Activated CD4-positive, alpha-beta T cell treated with anti-CD3 and anti-CD28 coated beads for 36 hours (primary cell): ENCODE measurements at regions of chr1 and their contacts with region 1.

Region 1: DNA sequence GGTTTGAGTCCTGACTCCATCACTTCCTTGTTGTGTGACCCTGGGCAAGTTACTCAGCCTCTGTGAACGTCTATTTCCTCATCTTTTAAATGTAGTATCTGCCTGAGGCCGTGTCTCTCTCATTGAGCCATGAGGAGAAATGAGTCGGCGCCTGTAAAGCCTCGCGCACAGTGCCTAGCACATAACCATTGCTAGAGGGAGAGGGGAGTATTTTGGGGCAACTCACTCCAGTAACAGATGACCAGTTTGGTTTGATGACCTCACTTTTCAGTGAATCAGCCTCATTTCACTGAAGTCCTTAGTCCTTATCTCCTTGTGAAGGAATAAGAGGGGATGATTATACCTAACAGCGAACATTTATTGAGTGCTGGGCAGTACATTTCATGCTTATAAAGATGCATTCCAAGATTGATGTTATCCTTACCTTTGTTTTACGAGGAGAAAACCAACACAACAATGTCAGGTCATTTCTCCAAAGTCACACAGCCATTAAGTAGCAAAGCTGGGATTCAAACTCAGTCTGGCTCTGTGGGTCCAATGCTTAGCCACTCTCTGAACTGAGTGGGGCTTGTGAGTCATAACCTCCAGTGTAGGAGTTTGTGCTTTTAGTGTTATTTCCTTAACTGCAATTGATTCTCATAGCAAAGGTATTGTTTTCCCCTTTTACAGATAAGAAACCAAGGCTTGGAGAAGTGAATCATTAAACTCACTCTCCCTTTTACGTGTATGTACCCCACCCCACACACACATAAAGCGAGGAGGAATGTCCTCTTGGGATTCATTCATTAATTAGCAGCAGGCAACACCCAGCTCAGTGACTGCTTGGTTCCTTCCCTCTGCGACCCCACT is 25.9 kb downstream of the KCNC4 start:
- DNase-seq: peak; percentile 85
- ATAC-seq: peak; percentile 90
- H3K4me3 Mint-ChIP-seq: peak overlapping the region; percentile 42
- H3K27ac Mint-ChIP-seq: peak overlapping the region; percentile 95
- H3K4me1 Mint-ChIP-seq: peaks cover 57% of the 10 kb centered on the region
- H3K27me3 Mint-ChIP-seq: no peaks in the 10 kb centered on the region

Region 2: DNA sequence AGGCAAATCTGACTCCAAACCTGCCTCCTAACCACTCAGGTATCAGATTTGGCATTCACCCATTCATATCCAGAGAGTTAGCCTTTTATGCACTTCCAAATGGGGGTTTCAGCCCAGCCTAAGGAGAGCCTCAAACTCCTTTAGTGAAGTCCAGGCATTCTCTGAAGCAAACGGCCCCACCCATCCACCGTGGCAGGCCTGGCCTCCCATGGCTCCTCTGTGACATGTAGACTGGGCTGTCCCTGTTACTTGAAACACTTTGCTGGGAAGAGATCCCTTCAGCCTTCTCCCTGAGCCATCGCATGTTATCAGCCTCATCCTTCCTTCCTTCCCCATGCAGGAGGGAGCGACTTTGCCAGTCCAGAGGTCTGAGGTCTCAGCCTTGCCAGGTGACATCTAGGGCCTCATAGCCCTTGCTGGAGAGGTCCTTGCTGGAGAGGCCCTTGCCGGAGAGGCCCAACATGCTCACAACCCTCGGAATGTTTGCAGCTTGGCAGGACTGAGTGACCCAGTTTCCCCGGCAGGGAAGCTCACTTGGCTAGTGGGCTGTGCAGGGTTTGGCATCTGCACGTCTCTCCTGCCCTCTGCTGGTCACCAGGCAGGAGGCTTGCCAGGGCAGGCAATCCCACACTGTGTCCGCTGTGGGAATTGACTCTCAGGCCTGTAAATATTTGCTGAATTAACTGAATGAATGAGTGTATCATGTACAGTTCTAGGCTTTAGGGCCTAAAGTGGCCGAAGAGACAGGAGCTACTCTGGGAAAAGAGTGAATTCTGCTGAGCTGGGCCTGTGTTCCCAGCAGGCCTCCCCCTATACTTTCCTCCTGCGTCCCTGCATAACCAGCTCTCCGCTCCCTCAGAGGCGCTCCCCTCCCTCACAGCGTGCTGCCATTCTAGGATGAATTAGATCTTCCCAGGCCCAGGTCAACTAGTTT is 76.4 kb after region 1 on chr1:
- CTCF ChIA-PET with region 1: no interaction called
- POLR2A ChIA-PET with region 1: no interaction called
- intact Hi-C with region 1: no loop called
- DNase-seq: peak; percentile 86
- ATAC-seq: peak; percentile 98
- H3K4me3 Mint-ChIP-seq: no peak overlapping the region
- H3K27ac Mint-ChIP-seq: no peak overlapping the region
- H3K4me1 Mint-ChIP-seq: no peaks in the 10 kb centered on the region
- H3K27me3 Mint-ChIP-seq: no peaks in the 10 kb centered on the region

Region 3: DNA sequence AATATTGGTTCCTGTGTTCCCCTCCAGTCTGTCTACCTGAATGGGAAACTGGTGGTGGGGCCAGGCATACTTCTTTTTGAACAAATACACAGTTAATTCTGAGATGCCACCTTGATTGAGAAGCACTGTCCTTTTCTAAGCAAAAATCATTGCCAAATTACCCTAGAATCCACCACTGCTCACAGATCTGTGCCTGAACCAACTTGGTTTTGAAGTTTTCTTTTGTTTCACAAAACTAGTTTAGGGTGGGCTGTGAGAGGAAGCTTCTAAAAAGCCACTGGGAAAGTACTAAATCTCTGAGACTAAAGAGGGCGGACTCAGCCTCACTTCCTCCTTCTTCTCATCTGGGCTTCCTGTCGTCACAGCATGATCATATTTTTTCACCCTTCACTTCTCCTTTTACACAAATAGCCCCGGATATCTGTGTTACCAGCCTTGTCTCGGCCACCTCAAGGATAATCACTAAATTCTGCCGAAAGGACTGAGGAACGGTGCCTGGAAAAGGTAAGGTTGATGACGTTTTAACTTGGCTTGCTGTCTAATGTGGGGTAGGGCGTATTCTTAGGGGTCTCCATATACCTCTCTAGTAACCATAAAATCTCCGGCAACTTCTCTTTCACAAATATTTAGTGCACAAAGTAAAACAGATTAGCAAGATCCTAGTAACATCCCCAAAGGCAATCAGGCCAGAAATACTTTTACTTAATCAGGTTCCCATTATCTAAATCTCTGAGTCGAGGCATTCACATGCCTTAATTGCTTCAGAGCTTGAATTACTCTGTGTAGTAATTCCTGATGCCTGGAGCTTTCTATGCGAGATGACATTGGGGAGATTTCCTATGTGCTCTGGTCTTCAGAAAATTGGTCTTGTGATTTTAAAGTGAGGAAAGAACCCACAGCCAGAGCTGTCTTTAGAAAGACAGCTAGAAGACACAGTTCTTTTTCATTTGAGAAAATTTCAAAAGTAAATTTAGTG is 637.0 kb after region 1 on chr1 and contains the start of gene CD53:
- CTCF ChIA-PET with region 1: no interaction called
- POLR2A ChIA-PET with region 1: no interaction called
- intact Hi-C with region 1: loop called in 1 of 2 experiments (anchors 2 kb)
- DNase-seq: peak; percentile 62
- ATAC-seq: peak; percentile 33
- H3K4me3 Mint-ChIP-seq: peak within 1 kb of the TSS; percentile 85
- H3K27ac Mint-ChIP-seq: peak within 1 kb of the TSS; percentile 95
- H3K4me1 Mint-ChIP-seq: peaks cover 39% of the 10 kb centered on the region
- H3K27me3 Mint-ChIP-seq: no peaks in the 10 kb centered on the region
- total RNA-seq, gene CD53: 238 to 244 TPM